ENCODE measurements at regions of chr6 and their contacts with region 1.

Region 1: GRCh38 chr6:46011241-46012085 is 4.2 kb downstream of the CLIC5 start:
- DNase-seq: peak; percentile 74
- ATAC-seq: peak; percentile 86
- H3K4me3 Mint-ChIP-seq: peak overlapping the region; percentile 39
- H3K27ac Mint-ChIP-seq: peak overlapping the region; percentile 58
- H3K4me1 Mint-ChIP-seq: peaks cover 51% of the 10 kb centered on the region
- H3K27me3 Mint-ChIP-seq: peaks cover 1% of the 10 kb centered on the region

Region 2: DNA sequence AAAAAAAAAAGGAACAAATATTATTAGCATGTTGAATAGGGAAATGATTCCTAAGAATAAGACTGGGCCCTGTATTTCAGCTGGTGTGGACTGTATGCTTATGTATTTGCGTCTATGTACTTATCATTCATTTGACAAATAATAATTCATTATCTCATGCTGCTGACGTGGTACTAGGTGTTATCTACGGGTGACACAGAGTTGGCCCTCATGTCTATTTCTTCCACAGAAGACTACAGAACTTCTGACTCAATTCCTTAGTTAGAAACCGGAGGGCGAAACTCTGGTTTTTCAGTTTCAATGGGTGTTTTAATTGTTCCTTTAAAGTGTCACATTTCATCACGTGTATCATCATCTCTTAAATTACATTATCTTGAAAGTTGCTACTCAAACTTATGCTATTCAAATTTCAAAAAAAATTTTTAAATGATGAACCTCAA is 301.7 kb before region 1 on chr6:
- CTCF ChIA-PET with region 1: interaction called, 3 read pairs
- POLR2A ChIA-PET with region 1: no interaction called
- intact Hi-C with region 1: loop called (anchors 5 to 10 kb)
- DNase-seq: peak; percentile 63
- ATAC-seq: peak; percentile 54
- H3K4me3 Mint-ChIP-seq: peak overlapping the region; percentile 31
- H3K27ac Mint-ChIP-seq: no peak overlapping the region
- H3K4me1 Mint-ChIP-seq: peaks cover 25% of the 10 kb centered on the region
- H3K27me3 Mint-ChIP-seq: no peaks in the 10 kb centered on the region

Region 3: DNA sequence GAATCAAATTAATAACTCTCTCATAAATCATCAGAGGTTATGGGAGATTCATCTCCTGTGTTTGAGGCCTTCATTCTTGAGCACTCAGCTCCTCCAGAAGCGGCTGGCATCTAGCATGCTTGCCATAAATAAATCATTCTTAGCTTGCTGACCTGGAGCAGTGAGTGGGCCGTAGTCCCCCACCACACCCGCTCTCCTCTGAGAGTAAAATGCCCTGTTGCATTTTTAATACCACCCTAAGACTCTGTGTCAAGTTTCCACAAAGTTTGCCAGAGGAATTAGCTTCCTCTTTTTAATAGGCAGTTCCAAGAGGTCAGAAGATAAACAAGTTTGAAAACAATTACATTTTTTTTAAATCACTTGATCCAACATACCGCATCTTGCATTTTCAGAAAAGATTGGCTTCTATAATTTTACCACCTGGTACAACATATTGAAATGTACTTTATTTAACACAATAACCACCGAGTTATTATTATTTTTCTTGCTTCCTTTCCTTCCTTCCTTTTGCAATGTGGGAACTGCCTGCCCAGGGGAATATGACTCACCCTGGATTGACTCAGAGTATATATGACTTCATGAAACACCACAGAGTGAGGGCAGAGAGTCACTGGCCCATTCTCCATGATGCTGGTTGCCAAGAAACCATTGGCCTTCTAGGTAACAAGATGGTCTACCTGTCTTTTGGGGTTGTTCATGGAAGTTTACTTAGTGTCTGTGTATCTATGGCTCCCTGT is 33.6 kb after region 1 on chr6:
- CTCF ChIA-PET with region 1: no interaction called
- POLR2A ChIA-PET with region 1: no interaction called
- intact Hi-C with region 1: no loop called
- DNase-seq: peak; percentile 43
- ATAC-seq: peak; percentile 86
- H3K4me3 Mint-ChIP-seq: no peak overlapping the region
- H3K27ac Mint-ChIP-seq: no peak overlapping the region
- H3K4me1 Mint-ChIP-seq: peaks cover 10% of the 10 kb centered on the region
- H3K27me3 Mint-ChIP-seq: no peaks in the 10 kb centered on the region